ENCODE measurements at regions of chrX and their contacts with region 1.

Region 1: DNA sequence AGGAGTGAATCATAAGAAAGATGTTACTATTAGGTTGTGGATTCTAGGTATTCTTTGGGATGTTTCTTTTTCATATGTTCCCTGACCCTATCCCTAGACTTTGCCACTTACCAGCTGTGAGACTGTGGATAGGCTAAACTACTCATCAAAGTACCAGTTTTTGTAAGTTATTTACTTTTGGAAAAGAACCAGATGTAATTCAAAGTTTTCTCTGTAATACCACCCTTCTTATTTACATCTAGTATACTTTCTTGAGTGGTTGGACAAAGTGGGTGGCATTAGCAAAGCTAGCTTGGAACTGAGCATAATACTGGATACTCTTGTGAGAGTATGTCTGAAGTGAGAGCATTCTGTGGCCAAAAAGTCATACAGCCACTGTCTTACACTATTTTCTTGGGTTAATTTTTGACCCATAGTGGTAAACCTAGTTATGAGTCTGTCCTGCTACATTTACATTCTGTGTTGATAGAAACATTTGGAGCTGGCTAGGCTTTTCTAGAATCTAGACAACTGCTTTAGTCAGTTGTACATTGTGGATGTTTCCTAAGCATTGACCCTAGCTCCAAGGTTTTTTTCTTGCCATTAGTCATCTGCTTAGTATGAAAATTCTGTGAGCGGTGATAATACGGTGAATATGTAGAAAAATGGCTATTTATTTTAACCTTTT is 41.7 kb downstream of the KDM6A start:
- DNase-seq: no peak
- H3K4me3 ChIP-seq: peak overlapping the region in 1 of 3 experiments; percentile 32
- H3K4me3 Mint-ChIP-seq: no peak overlapping the region
- H3K27ac ChIP-seq: peak overlapping the region in 1 of 2 donors; percentile 21
- H3K27ac Mint-ChIP-seq: peak overlapping the region in 3 of 7 donors; percentile 27 to 65 (median 46)
- H3K4me1 ChIP-seq: peaks cover 15 to 37% of the 10 kb centered on the region in 2 donors
- H3K4me1 Mint-ChIP-seq: peaks cover 39% of the 10 kb centered on the region
- H3K27me3 ChIP-seq: no peaks in the 10 kb centered on the region
- H3K27me3 Mint-ChIP-seq: peaks cover 0 to 2% (median 0%) of the 10 kb centered on the region in 3 donors
- CTCF ChIP-seq: no peak

Region 2: DNA sequence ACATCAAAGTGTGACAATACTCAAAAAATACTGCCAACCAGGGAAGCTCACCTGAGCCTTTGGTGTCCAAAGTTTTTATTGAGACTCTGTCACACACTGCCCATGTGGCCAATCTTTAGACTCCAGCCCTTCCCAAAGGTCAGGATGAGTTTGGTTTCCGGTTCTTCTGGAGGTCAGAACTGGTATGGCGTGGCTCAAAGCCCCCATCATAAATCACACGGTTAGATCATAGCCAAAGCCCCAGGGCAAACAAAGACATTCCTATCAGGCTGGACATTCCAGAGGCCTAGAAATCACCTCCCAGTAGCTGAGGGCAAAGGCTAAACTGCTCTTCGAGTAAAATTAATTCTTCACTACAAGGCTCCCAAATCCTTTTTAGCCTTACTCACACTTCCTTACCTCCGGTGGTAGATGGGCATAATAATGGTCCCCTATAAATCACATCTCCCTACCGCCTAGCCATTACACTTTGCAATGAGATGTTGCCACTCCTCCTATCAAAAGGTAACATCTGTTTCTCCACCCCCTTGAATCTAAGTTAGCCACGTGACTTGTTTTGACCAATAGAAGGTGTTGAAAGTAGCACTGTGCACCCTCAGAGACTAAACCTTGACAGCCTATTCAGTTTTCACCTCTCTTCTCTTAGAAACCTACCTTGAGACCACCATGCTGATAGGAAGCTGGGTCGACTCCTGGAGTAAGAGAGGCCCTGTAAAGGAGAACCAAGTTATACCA is 208.7 kb before region 1 on chrX:
- intact Hi-C with region 1: no loop called
- DNase-seq: no peak
- H3K4me3 ChIP-seq: no peak overlapping the region
- H3K4me3 Mint-ChIP-seq: no peak overlapping the region
- H3K27ac ChIP-seq: no peak overlapping the region
- H3K27ac Mint-ChIP-seq: no peak overlapping the region
- H3K4me1 ChIP-seq: no peaks in the 10 kb centered on the region
- H3K4me1 Mint-ChIP-seq: peaks cover 4% of the 10 kb centered on the region
- H3K27me3 ChIP-seq: no peaks in the 10 kb centered on the region
- H3K27me3 Mint-ChIP-seq: peaks cover 0 to 9% (median 2%) of the 10 kb centered on the region in 3 donors
- CTCF ChIP-seq: no peak

Region 3: DNA sequence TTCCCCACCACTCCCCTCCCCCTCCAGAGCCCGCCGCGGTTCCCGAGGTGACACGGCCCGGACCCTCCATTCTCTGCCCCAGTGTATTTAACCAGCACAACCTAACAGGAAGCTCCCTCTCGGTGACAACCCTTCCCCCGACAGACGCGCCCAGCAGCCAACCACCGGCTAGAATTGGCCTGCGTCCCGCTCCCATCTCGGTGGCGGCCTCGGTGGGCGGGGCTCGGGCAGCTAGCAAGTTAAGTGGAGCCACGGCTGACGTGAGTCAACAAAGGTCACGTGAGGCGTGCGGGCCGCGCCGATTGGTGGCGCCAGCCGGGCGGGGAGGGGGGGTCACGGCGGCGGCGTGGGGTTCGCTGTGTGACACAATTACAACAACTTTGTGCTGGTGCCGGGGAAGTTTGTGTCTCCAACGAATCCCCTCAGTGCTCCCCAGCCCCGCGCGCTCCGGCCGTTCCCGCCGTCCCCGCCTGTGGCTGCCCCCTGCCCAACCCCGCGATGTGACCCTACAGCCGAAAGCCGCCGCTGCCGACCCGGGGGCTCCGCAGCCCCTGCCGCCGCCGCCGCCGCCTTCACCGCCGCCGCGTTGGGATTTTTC is 41.7 kb before region 1 on chrX and contains the start of gene KDM6A:
- intact Hi-C with region 1: loop called in 1 of 2 experiments (anchors 5 kb)
- DNase-seq: peak; percentile 90 to 99 (median 96)
- H3K4me3 ChIP-seq: peak within 1 kb of the TSS; percentile 84 to 93 (median 90)
- H3K4me3 Mint-ChIP-seq: peak within 1 kb of the TSS; percentile 87 to 93
- H3K27ac ChIP-seq: peak within 1 kb of the TSS; percentile 94 to 98
- H3K27ac Mint-ChIP-seq: peak within 1 kb of the TSS; percentile 92 to 99 (median 98)
- H3K4me1 ChIP-seq: peaks cover 10 to 36% of the 10 kb centered on the region in 2 donors
- H3K4me1 Mint-ChIP-seq: peaks cover 22% of the 10 kb centered on the region
- H3K27me3 ChIP-seq: no peaks in the 10 kb centered on the region
- H3K27me3 Mint-ChIP-seq: no peaks in the 10 kb centered on the region
- CTCF ChIP-seq: no peak
- polyA plus RNA-seq, gene KDM6A: 7.6 to 35.0 (median 13.8) TPM